Caco-2 (cell line): ENCODE measurements at regions of chr16 and their contacts with region 1.

Region 1: DNA sequence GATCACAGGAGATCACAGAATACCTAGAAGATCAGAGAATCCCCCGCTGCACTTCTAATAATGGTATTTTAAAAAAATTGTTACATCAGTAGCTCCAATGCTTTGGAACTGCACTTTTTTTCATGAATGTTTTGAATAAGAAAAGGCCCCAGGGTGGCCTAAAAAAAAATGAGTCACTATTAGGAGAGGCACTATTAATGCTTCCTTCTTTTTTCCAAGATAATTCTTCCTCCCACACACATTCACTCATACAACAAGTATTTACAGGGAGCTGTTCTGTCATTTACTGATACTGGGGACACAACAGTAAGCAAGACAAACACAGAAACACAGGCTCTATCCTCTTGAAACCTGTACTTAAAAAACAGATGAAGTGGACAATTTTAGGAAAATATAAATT is 675 bp upstream of the PDZD9 start:
- DNase-seq: no peak
- H3K4me3 ChIP-seq: no peak overlapping the region
- H3K4me3 Mint-ChIP-seq: peak overlapping the region; percentile 20
- H3K27ac Mint-ChIP-seq: no peak overlapping the region
- H3K4me1 ChIP-seq: peaks cover 17% of the 10 kb centered on the region
- H3K4me1 Mint-ChIP-seq: peaks cover 19% of the 10 kb centered on the region
- H3K27me3 ChIP-seq: no peaks in the 10 kb centered on the region
- H3K27me3 Mint-ChIP-seq: no peaks in the 10 kb centered on the region
- CTCF ChIP-seq: no peak

Region 2: GRCh38 chr16:22077700-22078313 is 76.2 kb after region 1 on chr16:
- CTCF ChIA-PET with region 1: interaction called, 53 read pairs
- POLR2A ChIA-PET with region 1: interaction called, 3 read pairs
- intact Hi-C with region 1: loop called (anchors 1 kb)
- DNase-seq: peak; percentile 49 to 70
- H3K4me3 ChIP-seq: no peak overlapping the region
- H3K4me3 Mint-ChIP-seq: no peak overlapping the region
- H3K27ac Mint-ChIP-seq: no peak overlapping the region
- H3K4me1 ChIP-seq: no peaks in the 10 kb centered on the region
- H3K4me1 Mint-ChIP-seq: no peaks in the 10 kb centered on the region
- H3K27me3 ChIP-seq: no peaks in the 10 kb centered on the region
- H3K27me3 Mint-ChIP-seq: no peaks in the 10 kb centered on the region
- CTCF ChIP-seq: peak; percentile 81 to 83

Region 3: GRCh38 chr16:22098405-22099255 is 97.0 kb after region 1 on chr16:
- CTCF ChIA-PET with region 1: interaction called, 6 read pairs
- POLR2A ChIA-PET with region 1: interaction called, 3 read pairs
- intact Hi-C with region 1: loop called (anchors 2 kb)
- DNase-seq: peak in 1 of 2 experiments; percentile 61
- H3K4me3 ChIP-seq: no peak overlapping the region
- H3K4me3 Mint-ChIP-seq: peak overlapping the region; percentile 42
- H3K27ac Mint-ChIP-seq: no peak overlapping the region
- H3K4me1 ChIP-seq: no peaks in the 10 kb centered on the region
- H3K4me1 Mint-ChIP-seq: no peaks in the 10 kb centered on the region
- H3K27me3 ChIP-seq: no peaks in the 10 kb centered on the region
- H3K27me3 Mint-ChIP-seq: peaks cover 3% of the 10 kb centered on the region
- CTCF ChIP-seq: peak; percentile 50 to 77

Region 4: DNA sequence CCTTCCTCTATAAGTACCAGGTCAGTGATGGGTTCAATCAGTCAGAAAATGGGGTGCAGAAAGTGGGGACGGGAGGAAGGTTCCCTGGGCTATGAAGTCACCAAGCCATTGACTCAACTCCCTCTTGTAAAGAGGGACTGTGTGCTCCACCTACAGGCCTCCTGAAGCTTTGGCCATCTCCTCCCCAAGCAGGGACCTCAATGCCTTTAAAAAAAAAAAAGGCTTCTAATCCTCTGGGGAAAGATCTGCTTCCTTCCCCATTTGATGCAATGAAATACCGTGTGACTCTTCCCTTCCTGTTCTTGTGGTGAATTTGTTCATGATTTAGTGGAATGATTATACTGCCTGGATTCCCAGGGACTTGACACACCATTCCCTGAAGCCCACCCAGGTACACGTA is 121.6 kb after region 1 on chr16:
- CTCF ChIA-PET with region 1: no interaction called
- POLR2A ChIA-PET with region 1: no interaction called
- intact Hi-C with region 1: no loop called
- DNase-seq: no peak
- H3K4me3 ChIP-seq: no peak overlapping the region
- H3K4me3 Mint-ChIP-seq: no peak overlapping the region
- H3K27ac Mint-ChIP-seq: no peak overlapping the region
- H3K4me1 ChIP-seq: no peaks in the 10 kb centered on the region
- H3K4me1 Mint-ChIP-seq: no peaks in the 10 kb centered on the region
- H3K27me3 ChIP-seq: no peaks in the 10 kb centered on the region
- H3K27me3 Mint-ChIP-seq: peaks cover 9% of the 10 kb centered on the region
- CTCF ChIP-seq: no peak

Region 5: DNA sequence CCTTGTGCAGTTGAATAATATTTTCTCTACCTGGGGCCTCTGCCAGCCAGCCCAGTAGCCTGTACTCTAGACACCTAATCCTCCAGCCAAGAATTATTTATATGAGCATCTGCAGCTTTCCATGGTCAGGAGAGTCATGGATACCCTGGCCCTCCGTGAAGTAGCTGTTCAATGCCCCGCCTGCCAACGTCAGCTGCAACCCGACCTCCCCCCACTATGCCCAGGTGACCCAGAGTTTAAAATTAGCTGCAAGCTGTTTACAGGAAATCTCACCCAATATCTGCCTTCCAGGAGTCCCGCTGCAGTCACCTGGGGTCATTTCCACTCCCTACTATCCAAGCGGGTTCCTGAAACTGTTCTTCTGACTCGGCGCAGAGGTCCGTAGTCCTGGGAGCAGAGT is 173.1 kb after region 1 on chr16:
- CTCF ChIA-PET with region 1: no interaction called
- POLR2A ChIA-PET with region 1: no interaction called
- intact Hi-C with region 1: loop called (anchors 5 kb)
- DNase-seq: no peak
- H3K4me3 ChIP-seq: no peak overlapping the region
- H3K4me3 Mint-ChIP-seq: no peak overlapping the region
- H3K27ac Mint-ChIP-seq: no peak overlapping the region
- H3K4me1 ChIP-seq: no peaks in the 10 kb centered on the region
- H3K4me1 Mint-ChIP-seq: no peaks in the 10 kb centered on the region
- H3K27me3 ChIP-seq: no peaks in the 10 kb centered on the region
- H3K27me3 Mint-ChIP-seq: no peaks in the 10 kb centered on the region
- CTCF ChIP-seq: no peak

Region 6: DNA sequence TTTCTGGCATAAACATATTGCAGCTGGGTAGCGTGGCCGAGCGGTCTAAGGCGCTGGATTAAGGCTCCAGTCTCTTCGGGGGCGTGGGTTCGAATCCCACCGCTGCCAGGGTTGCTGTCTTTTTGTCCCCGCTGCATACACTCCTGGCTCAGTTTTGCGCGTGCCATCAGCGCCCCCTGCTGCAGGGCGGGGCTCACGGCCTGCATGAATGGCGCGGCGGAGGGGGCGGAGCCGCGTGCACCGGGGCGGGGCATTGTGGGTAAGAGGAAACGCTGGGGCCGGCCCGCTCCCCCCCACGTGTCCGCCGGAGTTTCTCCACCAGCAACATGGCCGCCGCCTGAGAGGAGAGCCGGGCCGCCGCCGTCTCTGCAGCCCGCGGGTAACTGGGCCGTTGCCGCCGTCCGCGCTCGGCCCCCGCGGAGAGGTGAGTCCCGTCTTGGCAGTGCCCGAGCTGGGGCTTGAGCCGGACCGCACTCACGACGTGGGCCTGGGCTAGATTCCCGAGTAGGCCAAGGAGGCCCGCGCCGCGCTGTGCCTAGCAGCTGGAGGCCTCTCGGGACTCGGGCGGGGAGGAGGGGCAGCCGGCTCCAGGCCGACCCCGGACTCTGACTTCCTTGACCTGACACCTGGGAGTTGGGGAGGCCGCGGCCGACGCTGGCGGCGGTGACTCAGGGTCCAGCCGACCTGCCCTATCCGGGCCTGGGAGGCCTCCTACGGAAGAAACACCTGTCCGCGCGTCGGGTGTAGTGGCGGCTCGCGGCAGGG is 295.7 kb after region 1 on chr16 and contains the start of gene POLR3E:
- CTCF ChIA-PET with region 1: no interaction called
- POLR2A ChIA-PET with region 1: no interaction called
- intact Hi-C with region 1: loop called (anchors 5 kb)
- DNase-seq: peak; percentile 96 to 99
- H3K4me3 ChIP-seq: peak within 1 kb of the TSS; percentile 77
- H3K4me3 Mint-ChIP-seq: peak within 1 kb of the TSS; percentile 82
- H3K27ac Mint-ChIP-seq: peak within 1 kb of the TSS; percentile 83
- H3K4me1 ChIP-seq: peaks cover 5% of the 10 kb centered on the region
- H3K4me1 Mint-ChIP-seq: peaks cover 13% of the 10 kb centered on the region
- H3K27me3 ChIP-seq: no peaks in the 10 kb centered on the region
- H3K27me3 Mint-ChIP-seq: no peaks in the 10 kb centered on the region
- CTCF ChIP-seq: peak; percentile 85 to 88
- total RNA-seq, gene POLR3E: 68.7 and 70.8 TPM in 2 replicates